Activated T-helper 1 cell treated with anti-CD3 and anti-CD28 coated beads, Interleukin-12 subunit alpha, Interleukin-12 subunit beta, Interleukin-2, Interleukin-4 antibody, amounts not matched to agents 30 ng/mL and 10 ng/mL and 1 ng/mL, durations not matched to agents 14 hours and 24 hours and 36 hours (primary cell): ENCODE measurements at regions of chr18 and their contacts with region 1.

Region 1: DNA sequence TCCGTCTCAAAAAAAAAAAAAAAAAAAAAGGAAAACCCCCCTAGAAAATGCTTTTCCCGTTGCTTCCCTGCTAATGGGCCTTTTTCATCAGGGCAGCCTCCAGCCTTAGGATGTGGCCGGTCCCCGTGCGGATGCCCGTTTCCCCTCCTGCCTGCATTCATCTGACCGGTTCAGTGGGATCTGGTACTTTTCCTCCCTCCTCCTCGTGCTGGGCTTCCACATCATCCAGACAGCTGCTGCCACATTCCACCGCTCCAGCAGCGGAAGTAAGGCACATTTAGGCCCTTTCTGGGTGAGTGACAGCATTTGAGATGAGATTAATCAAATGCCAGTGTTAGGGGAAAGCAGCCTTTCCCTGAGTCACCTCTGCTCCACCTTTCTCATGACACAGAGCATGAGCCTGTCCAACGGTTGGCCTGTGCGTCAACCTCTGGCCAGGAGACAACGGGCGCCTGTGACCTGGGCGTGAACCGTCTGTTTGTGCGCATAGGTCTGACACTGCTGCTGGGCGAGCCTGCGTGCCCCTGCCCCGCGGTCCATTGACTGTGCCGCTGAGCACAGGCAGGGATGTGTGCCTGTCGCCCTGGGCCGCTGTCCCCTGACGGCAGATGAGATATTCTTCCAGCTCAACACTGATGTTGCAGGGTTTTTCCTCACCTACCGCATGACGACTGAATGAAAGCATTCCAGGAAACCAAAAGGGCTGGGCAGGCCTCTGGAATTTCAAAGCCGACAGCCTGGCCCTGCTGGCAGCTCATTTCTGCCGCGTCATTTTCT is 174.0 kb downstream of the TGIF1 start:
- DNase-seq: no peak
- H3K4me3 Mint-ChIP-seq: peak overlapping the region; percentile 47
- H3K27ac Mint-ChIP-seq: peak overlapping the region; percentile 90
- H3K4me1 Mint-ChIP-seq: peaks cover 42% of the 10 kb centered on the region
- H3K27me3 Mint-ChIP-seq: peaks cover 2% of the 10 kb centered on the region

Region 2: DNA sequence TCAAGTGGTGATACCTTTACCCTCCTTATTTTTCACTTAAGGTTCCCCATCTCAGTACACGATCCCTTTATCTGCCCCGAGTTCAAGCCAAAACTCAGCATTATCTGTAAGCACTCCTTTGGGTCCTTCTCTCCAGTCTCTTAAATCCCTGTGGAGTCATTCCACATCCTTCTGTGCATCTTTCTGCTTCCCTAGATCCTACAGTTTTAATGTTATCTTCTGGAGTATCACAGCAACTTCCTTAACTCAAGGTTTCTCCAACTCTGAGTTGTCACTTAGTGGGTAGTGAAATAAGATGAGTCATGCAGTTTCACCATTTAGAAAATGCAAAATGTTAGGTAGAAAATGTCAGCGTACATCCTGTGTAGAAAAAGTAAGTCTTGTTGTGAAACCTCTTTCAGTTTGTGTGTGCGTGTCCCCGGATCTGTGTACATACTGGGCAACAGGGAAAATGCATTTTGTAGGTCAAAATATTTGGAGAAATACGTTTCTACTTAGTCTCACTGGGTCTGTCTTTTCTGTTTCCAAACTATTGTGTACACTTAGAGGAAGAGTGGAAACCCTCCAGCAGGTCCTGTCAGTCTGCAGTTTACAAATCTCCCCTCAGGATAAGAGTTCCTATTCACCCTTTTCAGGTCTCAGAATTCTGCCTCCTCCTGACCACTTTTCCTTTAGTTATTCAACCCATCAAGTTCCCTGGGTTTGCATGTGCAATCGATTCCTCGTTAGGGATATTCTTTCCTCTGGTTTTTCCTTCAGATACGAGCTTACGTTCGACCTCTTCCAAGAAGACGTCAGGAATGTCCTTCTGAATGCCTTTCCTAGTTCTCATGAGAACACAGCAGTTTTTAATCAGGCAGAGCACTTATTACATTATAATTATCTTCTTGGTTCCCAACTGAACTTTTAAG is 19.2 kb before region 1 on chr18:
- intact Hi-C with region 1: loop called (anchors 1 kb)
- DNase-seq: peak; percentile 38
- H3K4me3 Mint-ChIP-seq: no peak overlapping the region
- H3K27ac Mint-ChIP-seq: no peak overlapping the region
- H3K4me1 Mint-ChIP-seq: peaks cover 19% of the 10 kb centered on the region
- H3K27me3 Mint-ChIP-seq: no peaks in the 10 kb centered on the region

Region 3: GRCh38 chr18:3634250-3634939 is 10.4 kb after region 1 on chr18:
- intact Hi-C with region 1: loop called (anchors 1 kb)
- DNase-seq: no peak
- H3K4me3 Mint-ChIP-seq: no peak overlapping the region
- H3K27ac Mint-ChIP-seq: peak overlapping the region; percentile 62
- H3K4me1 Mint-ChIP-seq: peaks cover 22% of the 10 kb centered on the region
- H3K27me3 Mint-ChIP-seq: no peaks in the 10 kb centered on the region

Region 4: GRCh38 chr18:3645384-3646156 is 21.6 kb after region 1 on chr18:
- intact Hi-C with region 1: loop called (anchors 1 kb)
- DNase-seq: no peak
- H3K4me3 Mint-ChIP-seq: no peak overlapping the region
- H3K27ac Mint-ChIP-seq: no peak overlapping the region
- H3K4me1 Mint-ChIP-seq: peaks cover 49% of the 10 kb centered on the region
- H3K27me3 Mint-ChIP-seq: no peaks in the 10 kb centered on the region

Region 5: DNA sequence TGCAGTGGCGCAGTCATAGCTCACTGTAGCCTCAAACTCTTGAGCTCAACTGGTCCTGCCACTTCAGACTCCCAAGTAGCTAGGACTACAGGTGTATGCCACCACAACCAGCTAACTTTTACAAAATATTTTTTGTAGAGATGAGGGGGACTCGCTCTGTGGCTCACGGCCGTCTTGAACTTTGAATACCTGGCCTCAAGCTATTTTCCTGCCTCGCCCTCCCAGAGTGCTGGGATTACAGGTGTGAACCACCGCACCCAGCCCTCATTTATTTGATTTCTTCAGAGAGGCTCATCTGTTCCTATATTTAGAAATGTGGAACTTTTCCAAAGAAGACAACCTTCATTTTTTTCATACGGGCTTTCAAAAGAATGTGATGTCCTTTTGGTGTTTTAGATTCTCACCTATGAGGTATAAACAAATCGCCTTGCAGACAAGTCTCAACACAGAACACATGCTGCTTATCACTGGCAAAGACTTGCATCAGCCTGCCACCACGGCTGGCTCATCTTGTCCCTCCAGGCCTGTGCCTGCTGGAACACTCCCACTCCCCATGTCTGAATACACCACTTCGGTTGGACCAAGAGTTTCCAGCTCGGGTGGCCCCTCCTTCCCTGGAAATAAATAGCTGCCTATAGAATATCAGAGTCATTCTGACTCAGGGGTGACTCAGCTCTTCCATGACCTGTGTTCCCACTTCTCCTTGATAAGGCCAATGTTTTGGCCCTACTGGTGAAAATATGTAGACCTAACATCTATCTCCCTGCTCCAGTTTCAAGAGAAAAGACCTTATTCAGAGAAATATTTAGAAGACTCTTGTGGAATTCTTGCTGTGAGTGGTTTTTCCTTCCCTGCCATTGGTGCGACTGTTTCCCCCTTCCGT is 28.7 kb after region 1 on chr18:
- intact Hi-C with region 1: loop called (anchors 1 kb)
- DNase-seq: peak; percentile 12
- H3K4me3 Mint-ChIP-seq: peak overlapping the region; percentile 51
- H3K27ac Mint-ChIP-seq: peak overlapping the region; percentile 90
- H3K4me1 Mint-ChIP-seq: peaks cover 54% of the 10 kb centered on the region
- H3K27me3 Mint-ChIP-seq: peaks cover 2% of the 10 kb centered on the region

Region 6: GRCh38 chr18:4251873-4252272 is 627.9 kb after region 1 on chr18:
- intact Hi-C with region 1: no loop called
- DNase-seq: no peak
- H3K4me3 Mint-ChIP-seq: no peak overlapping the region
- H3K27ac Mint-ChIP-seq: no peak overlapping the region
- H3K4me1 Mint-ChIP-seq: no peaks in the 10 kb centered on the region
- H3K27me3 Mint-ChIP-seq: no peaks in the 10 kb centered on the region